ENCODE measurements at regions of chr21 and their contacts with region 1.

Region 1: GRCh38 chr21:45130324-45130774 is 56.0 kb downstream of the ADARB1 start:
- DNase-seq: peak in 1 of 2 donors; percentile 41
- ATAC-seq: peak in 7 of 8 donors; percentile 46 to 75 (median 64)
- H3K4me3 ChIP-seq: peak overlapping the region in 7 of 10 donors; percentile 1 to 32 (median 20)
- H3K27ac ChIP-seq: peak overlapping the region in 9 of 10 donors; percentile 55 to 87 (median 71)
- H3K4me1 ChIP-seq: peaks cover 15 to 75% (median 57%) of the 10 kb centered on the region in 9 donors
- H3K27me3 ChIP-seq: no peaks in the 10 kb centered on the region
- CTCF ChIP-seq: no peak

Region 2: GRCh38 chr21:44949779-44950198 is 180.6 kb before region 1 on chr21:
- intact Hi-C with region 1: loop called in 9 of 10 experiments (anchors 2 to 5 kb)
- DNase-seq: peak; percentile 91 to 93
- ATAC-seq: peak; percentile 63 to 76 (median 67)
- H3K4me3 ChIP-seq: no peak overlapping the region
- H3K27ac ChIP-seq: peak overlapping the region; percentile 42 to 86 (median 79)
- H3K4me1 ChIP-seq: peaks cover 13 to 90% (median 53%) of the 10 kb centered on the region in 9 donors
- H3K27me3 ChIP-seq: no peaks in the 10 kb centered on the region
- CTCF ChIP-seq: peak; percentile 88 to 98 (median 96)

Region 3: DNA sequence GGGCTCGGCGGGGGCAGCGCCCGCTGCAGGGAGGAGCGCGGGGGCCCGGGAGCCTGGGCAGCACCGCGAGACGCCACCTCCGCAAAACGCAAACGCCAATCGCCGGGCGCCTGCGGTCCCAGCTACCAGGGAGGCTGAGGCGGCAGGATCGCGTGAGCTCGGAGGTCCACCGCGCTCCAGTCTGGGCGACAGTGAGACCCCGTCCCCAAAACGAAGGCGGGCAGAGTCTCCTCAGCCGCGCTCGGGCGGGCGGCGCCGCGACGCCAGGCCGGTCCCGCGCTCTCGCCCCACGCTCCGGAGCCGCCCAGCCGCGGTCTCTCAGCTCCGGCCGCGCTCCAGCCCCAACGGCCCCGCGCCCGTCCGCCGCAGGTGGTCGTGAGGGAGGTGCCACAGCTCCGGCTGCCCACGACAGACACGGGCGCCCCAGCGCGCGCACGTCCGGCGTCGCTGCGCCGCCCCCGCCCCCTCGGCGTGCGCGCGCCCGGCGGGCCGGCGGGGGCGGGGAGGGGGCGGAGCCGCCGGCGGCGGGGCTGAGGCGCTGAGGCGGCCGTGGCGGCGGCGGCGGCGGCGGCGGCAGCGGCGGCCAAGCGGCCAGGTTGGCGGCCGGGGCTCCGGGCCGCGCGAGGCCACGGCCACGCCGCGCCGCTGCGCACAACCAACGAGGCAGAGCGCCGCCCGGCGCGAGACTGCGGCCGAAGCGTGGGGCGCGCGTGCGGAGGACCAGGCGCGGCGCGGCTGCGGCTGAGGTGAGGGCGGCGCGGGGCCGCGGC is 56.1 kb before region 1 on chr21 and contains the start of gene ADARB1:
- intact Hi-C with region 1: loop called in 4 of 10 experiments (anchors 5 to 10 kb)
- DNase-seq: peak; percentile 48 to 78
- ATAC-seq: peak; percentile 51 to 91 (median 72)
- H3K4me3 ChIP-seq: peak within 1 kb of the TSS; percentile 84 to 100 (median 89)
- H3K27ac ChIP-seq: peak within 1 kb of the TSS; percentile 83 to 97 (median 94)
- H3K4me1 ChIP-seq: peaks cover 4 to 48% (median 24%) of the 10 kb centered on the region in 9 donors
- H3K27me3 ChIP-seq: peaks cover 0 to 8% (median 0%) of the 10 kb centered on the region in 7 donors
- CTCF ChIP-seq: no peak
- total RNA-seq, gene ADARB1: 11.8 to 21.2 (median 13.5) TPM

Region 4: GRCh38 chr21:45080639-45081414 is 49.5 kb before region 1 on chr21:
- intact Hi-C with region 1: loop called in 4 of 10 experiments (anchors 5 to 10 kb)
- DNase-seq: no peak
- ATAC-seq: peak in 6 of 8 donors; percentile 31 to 72 (median 60)
- H3K4me3 ChIP-seq: no peak overlapping the region
- H3K27ac ChIP-seq: peak overlapping the region in 4 of 10 donors; percentile 5 to 24 (median 14)
- H3K4me1 ChIP-seq: peaks cover 10 to 88% (median 37%) of the 10 kb centered on the region in 9 donors
- H3K27me3 ChIP-seq: no peaks in the 10 kb centered on the region
- CTCF ChIP-seq: no peak

Region 5: GRCh38 chr21:45091550-45092322 is 38.6 kb before region 1 on chr21:
- intact Hi-C with region 1: loop called in 2 of 10 experiments (anchors 5 kb)
- DNase-seq: no peak
- ATAC-seq: peak in 3 of 8 donors; percentile 28 to 53 (median 40)
- H3K4me3 ChIP-seq: no peak overlapping the region
- H3K27ac ChIP-seq: peak overlapping the region in 9 of 10 donors; percentile 1 to 93 (median 75)
- H3K4me1 ChIP-seq: peaks cover 7 to 74% (median 58%) of the 10 kb centered on the region in 9 donors
- H3K27me3 ChIP-seq: no peaks in the 10 kb centered on the region
- CTCF ChIP-seq: no peak

Region 6: DNA sequence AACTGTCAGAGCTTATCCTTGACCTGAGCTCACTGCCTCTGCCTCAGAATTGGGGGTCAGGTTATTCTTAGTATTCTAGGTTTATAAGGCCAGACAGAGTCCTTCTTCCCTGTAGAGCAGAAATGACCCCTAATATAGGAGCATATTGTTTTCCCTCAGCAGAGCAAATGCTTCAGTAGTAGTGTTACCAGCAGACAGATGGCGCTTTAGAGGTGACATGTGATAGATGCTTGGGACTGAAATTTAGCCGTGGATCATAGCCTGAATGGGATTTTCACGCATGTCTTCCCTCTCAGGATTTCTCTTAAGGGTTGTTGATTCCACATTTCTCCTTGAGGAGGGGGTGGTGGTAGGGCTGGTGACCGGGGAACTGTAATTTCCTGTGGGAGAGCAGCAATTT is 31.5 kb before region 1 on chr21:
- intact Hi-C with region 1: loop called in 3 of 10 experiments (anchors 2 to 5 kb)
- DNase-seq: no peak
- ATAC-seq: no peak
- H3K4me3 ChIP-seq: no peak overlapping the region
- H3K27ac ChIP-seq: peak overlapping the region in 1 of 10 donors; percentile 6
- H3K4me1 ChIP-seq: peaks cover 22 to 93% (median 62%) of the 10 kb centered on the region in 9 donors
- H3K27me3 ChIP-seq: no peaks in the 10 kb centered on the region
- CTCF ChIP-seq: peak in 7 of 9 donors; percentile 34 to 56 (median 46)

Region 7: DNA sequence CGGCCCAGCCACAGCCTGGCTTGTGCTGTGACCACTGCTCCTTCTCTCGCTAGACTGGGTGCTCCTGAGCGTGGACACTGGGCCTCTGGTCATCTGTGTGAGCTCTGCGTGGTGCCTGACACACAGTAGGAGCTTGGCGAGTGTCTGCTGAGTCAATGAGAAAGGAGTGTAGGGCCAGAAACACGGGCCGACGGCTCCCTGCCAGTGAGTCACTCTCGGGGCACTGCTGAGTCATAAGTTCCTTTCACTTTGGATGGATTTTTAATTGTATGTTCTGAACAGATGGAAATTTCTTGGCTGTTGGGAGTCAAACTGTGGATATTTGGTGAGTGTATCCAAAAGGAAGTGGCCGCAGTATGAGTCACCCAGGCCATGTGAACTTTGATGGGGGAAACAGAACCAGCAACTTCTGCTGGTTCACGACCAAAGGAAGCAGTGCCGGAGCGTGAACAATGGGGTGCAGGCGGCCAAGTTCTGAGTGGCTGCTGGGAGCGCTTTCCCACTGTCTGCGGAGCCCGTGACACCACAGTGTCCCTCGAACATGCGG is 233.6 kb after region 1 on chr21:
- intact Hi-C with region 1: no loop called
- DNase-seq: peak; percentile 83 to 93
- ATAC-seq: peak; percentile 80 to 92 (median 88)
- H3K4me3 ChIP-seq: peak overlapping the region in 4 of 10 donors; percentile 12 to 24 (median 18)
- H3K27ac ChIP-seq: peak overlapping the region; percentile 85 to 99 (median 95)
- H3K4me1 ChIP-seq: peaks cover 19 to 73% (median 48%) of the 10 kb centered on the region in 9 donors
- H3K27me3 ChIP-seq: no peaks in the 10 kb centered on the region
- CTCF ChIP-seq: no peak

Region 8: GRCh38 chr21:45454926-45455673 is 324.8 kb after region 1 on chr21:
- intact Hi-C with region 1: no loop called
- DNase-seq: peak in 1 of 2 donors; percentile 61
- ATAC-seq: peak; percentile 72 to 88 (median 80)
- H3K4me3 ChIP-seq: peak overlapping the region in 9 of 10 donors; percentile 33 to 53 (median 42)
- H3K27ac ChIP-seq: peak overlapping the region in 8 of 10 donors; percentile 10 to 58 (median 24)
- H3K4me1 ChIP-seq: peaks cover 0 to 44% (median 11%) of the 10 kb centered on the region in 9 donors
- H3K27me3 ChIP-seq: no peaks in the 10 kb centered on the region
- CTCF ChIP-seq: no peak

Region 9: GRCh38 chr21:46472246-46472645 is 1341.9 kb after region 1 on chr21:
- intact Hi-C with region 1: no loop called
- DNase-seq: no peak
- ATAC-seq: peak in 6 of 8 donors; percentile 60 to 78 (median 70)
- H3K4me3 ChIP-seq: no peak overlapping the region
- H3K27ac ChIP-seq: peak overlapping the region in 3 of 10 donors; percentile 17 to 74 (median 23)
- H3K4me1 ChIP-seq: peaks cover 0 to 39% (median 16%) of the 10 kb centered on the region in 9 donors
- H3K27me3 ChIP-seq: no peaks in the 10 kb centered on the region
- CTCF ChIP-seq: no peak